ENCODE measurements at regions of chr11 and their contacts with region 1.

Region 1: GRCh38 chr11:46017341-46017740 is 94.9 kb downstream of the LARGE2 start:
- DNase-seq: no peak
- H3K4me3 ChIP-seq: no peak overlapping the region
- H3K27ac ChIP-seq: no peak overlapping the region
- H3K4me1 ChIP-seq: no peaks in the 10 kb centered on the region
- H3K27me3 ChIP-seq: no peaks in the 10 kb centered on the region
- CTCF ChIP-seq: no peak

Region 2: DNA sequence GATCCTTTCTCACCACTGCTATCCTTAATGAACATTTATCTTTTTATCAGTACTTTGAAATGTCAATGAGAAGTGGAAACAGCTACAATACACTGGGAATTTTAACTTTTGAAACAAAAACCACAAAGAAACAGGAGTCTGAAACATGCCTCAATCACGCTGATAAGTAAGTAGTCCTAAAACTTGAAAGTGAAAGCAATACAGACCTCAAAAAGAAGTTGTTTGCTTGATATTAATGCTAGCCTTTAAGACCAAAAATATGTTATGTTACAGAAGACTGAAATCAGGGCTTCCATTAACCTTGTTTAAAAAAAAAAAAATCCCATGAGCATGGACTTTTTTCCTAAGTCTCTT is 82.6 kb after region 1 on chr11:
- CTCF ChIA-PET with region 1: no interaction called
- POLR2A ChIA-PET with region 1: interaction called, 25 read pairs
- intact Hi-C with region 1: no loop called
- DNase-seq: no peak
- H3K4me3 ChIP-seq: no peak overlapping the region
- H3K27ac ChIP-seq: no peak overlapping the region
- H3K4me1 ChIP-seq: no peaks in the 10 kb centered on the region
- H3K27me3 ChIP-seq: no peaks in the 10 kb centered on the region
- CTCF ChIP-seq: no peak

Region 3: DNA sequence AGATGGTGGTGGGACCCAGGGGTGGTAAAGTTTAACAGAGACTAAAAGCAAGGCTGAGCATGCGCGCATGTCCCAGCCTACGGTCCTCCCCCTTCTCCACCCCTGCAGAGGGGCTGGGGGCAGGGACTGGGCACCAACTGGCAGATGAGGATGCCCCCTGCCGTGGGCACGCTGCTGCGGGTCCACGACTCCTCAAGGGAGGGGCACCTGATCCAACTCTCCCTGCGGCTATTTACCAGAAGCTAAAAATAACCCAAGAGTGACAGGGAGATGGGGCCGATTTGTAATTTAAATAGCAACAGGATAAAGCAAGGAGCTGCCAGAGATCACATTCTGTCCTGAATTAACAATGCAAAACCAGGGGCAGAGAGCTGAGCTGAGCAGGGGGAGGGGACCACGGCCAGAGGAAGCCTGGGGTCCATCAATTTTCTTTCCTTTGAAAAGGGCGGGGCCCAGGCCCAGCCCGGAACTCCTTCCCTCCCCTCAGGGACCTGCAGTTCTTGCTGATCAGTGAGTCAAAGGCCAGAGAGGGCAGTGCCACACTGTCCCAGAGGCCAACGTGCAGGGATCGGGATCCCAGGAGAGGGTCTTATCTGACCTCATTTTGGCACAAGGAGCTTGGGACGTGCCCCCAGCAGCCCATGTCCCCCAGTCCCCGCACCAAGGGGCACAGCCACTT is 321.8 kb after region 1 on chr11:
- CTCF ChIA-PET with region 1: interaction called, 10 read pairs
- POLR2A ChIA-PET with region 1: no interaction called
- intact Hi-C with region 1: no loop called
- DNase-seq: peak; percentile 64 to 81
- H3K4me3 ChIP-seq: peak overlapping the region; percentile 49
- H3K27ac ChIP-seq: peak overlapping the region; percentile 79
- H3K4me1 ChIP-seq: peaks cover 77% of the 10 kb centered on the region
- H3K27me3 ChIP-seq: no peaks in the 10 kb centered on the region
- CTCF ChIP-seq: 0 out of 2 replicates have a peak, but pooled peaks have one; percentile 25